ENCODE measurements at regions of chr19 and their contacts with region 1.

Region 1: DNA sequence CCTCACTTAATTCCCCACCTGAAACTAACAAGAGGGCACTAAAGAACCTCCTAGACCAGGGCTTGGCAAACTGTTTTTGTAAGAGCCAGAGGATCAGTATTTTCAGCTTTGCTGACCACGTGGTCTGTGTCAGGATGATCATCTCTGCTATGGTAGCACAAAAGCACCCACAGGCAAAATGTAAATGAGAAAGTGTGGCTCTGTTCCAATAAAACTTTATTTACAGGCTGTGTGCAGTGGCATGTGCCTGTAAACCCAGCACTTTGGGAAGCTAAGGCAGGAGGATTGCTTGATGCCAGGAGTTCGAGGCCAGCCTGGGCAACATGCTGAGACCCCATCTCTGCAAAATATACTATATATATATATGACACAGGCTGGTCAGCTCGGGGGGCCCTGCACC is 31.2 kb downstream of the DNMT1 start:
- DNase-seq: no peak
- ATAC-seq: no peak
- H3K4me3 ChIP-seq: no peak overlapping the region
- H3K27ac ChIP-seq: no peak overlapping the region
- H3K4me1 ChIP-seq: no peaks in the 10 kb centered on the region
- H3K27me3 ChIP-seq: no peaks in the 10 kb centered on the region
- CTCF ChIP-seq: no peak

Region 2: GRCh38 chr19:9808855-9809824 is 354.4 kb before region 1 on chr19:
- CTCF ChIA-PET with region 1: no interaction called
- POLR2A ChIA-PET with region 1: no interaction called
- in situ Hi-C with region 1: no loop called
- intact Hi-C with region 1: no loop called
- DNase-seq: no peak
- ATAC-seq: no peak
- H3K4me3 ChIP-seq: no peak overlapping the region
- H3K27ac ChIP-seq: no peak overlapping the region
- H3K4me1 ChIP-seq: no peaks in the 10 kb centered on the region
- H3K27me3 ChIP-seq: no peaks in the 10 kb centered on the region
- CTCF ChIP-seq: no peak

Region 3: GRCh38 chr19:9834726-9835506 is 328.6 kb before region 1 on chr19 and contains the start of gene PIN1:
- CTCF ChIA-PET with region 1: no interaction called
- POLR2A ChIA-PET with region 1: interaction called, 11 read pairs
- in situ Hi-C with region 1: no loop called
- intact Hi-C with region 1: no loop called
- DNase-seq: peak; percentile 85
- ATAC-seq: peak; percentile 99
- H3K4me3 ChIP-seq: peak within 1 kb of the TSS; percentile 73 to 74
- H3K27ac ChIP-seq: peak within 1 kb of the TSS; percentile 70
- H3K4me1 ChIP-seq: 0 out of 2 replicates have a peak, but pooled peaks cover 4% of the 10 kb centered on the region
- H3K27me3 ChIP-seq: no peaks in the 10 kb centered on the region
- CTCF ChIP-seq: no peak; the same call in 1 of the 2 replicates
- total RNA-seq, gene PIN1: 102 TPM

Region 4: DNA sequence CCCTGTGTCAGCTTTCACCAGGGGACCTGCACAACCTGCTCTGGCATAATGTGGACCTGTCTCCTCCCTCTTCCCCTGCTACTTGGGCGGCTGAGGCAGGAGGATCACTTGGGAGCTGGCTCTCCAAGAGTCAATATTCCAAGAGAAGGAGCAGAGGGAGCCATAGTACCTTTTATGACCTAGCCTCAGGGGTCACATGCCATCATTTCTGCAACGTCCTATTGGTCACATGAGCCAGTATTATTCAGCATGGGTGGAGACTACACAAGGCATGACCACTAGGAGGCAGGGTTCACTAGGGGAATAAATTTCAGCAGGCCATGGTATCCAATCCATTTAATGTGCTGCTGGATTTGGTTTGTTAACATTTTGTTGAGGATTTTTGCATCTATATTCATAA is 89.4 kb before region 1 on chr19:
- CTCF ChIA-PET with region 1: interaction called, 10 read pairs
- POLR2A ChIA-PET with region 1: no interaction called
- in situ Hi-C with region 1: no loop called
- intact Hi-C with region 1: no loop called
- DNase-seq: no peak
- ATAC-seq: peak; percentile 71
- H3K4me3 ChIP-seq: no peak overlapping the region
- H3K27ac ChIP-seq: no peak overlapping the region
- H3K4me1 ChIP-seq: no peaks in the 10 kb centered on the region
- H3K27me3 ChIP-seq: no peaks in the 10 kb centered on the region
- CTCF ChIP-seq: peak; percentile 66; the same call in 1 of the 2 replicates

Region 5: GRCh38 chr19:10269333-10270179 is 106.0 kb after region 1 on chr19:
- CTCF ChIA-PET with region 1: no interaction called
- POLR2A ChIA-PET with region 1: no interaction called
- in situ Hi-C with region 1: no loop called
- intact Hi-C with region 1: no loop called
- DNase-seq: peak; percentile 33
- ATAC-seq: peak; percentile 70
- H3K4me3 ChIP-seq: peak overlapping the region; percentile 55 to 83
- H3K27ac ChIP-seq: peak overlapping the region; percentile 91
- H3K4me1 ChIP-seq: peaks cover 4% of the 10 kb centered on the region
- H3K27me3 ChIP-seq: no peaks in the 10 kb centered on the region
- CTCF ChIP-seq: peak; percentile 96